BJ (cell line): ENCODE measurements at regions of chr2 and their contacts with region 1.

Region 1: GRCh38 chr2:224369028-224369632 is 32.8 kb downstream of the FAM124B start:
- DNase-seq: no peak
- H3K4me3 ChIP-seq: no peak overlapping the region
- H3K27me3 ChIP-seq: peaks cover 5% of the 10 kb centered on the region
- CTCF ChIP-seq: peak; percentile 66

Region 2: GRCh38 chr2:223970343-223971128 is 398.6 kb before region 1 on chr2:
- CTCF ChIA-PET with region 1: interaction called, 31 read pairs
- POLR2A ChIA-PET with region 1: no interaction called
- DNase-seq: no peak
- H3K4me3 ChIP-seq: no peak overlapping the region
- H3K27me3 ChIP-seq: no peaks in the 10 kb centered on the region
- CTCF ChIP-seq: peak; percentile 82

Region 3: DNA sequence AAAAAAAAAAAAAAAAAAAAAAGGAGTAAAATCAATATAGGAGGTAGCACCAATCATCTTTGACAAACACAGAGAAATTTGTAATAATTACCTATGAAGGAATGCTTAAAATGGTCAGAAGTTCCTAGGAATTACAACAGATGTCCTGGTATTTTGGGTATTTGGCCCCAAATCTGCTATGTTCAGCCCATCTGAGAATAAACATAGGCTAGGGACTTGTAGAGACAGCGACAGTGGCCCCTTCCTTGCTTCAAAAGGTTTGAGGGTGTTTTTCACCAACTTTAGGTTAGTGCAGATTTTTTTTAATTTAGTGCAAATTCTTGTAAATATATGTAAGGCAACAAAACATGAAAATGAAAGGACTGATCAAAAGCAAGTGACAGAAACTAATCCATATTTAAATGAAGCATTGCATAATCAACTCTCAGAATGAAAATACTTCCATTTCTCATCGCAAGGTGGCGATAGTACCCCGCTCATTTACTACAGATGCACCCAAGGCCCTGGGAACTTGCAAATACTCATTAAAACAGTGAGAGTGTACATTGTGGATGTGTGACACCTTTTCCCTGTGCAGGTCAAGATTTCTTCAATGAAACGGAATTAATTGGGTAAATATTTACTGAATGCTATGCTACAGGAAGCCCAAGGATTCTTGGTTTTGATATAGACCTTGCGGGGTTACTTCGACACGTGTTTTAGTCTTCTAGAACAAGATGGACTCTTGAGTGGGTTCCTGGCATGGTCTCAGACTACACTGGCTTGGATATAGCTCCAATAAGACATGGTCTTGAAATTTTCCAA is 11.8 kb before region 1 on chr2:
- CTCF ChIA-PET with region 1: interaction called, 10 read pairs
- POLR2A ChIA-PET with region 1: no interaction called
- DNase-seq: no peak
- H3K4me3 ChIP-seq: no peak overlapping the region
- H3K27me3 ChIP-seq: peaks cover 1% of the 10 kb centered on the region
- CTCF ChIP-seq: peak; percentile 66

Region 4: DNA sequence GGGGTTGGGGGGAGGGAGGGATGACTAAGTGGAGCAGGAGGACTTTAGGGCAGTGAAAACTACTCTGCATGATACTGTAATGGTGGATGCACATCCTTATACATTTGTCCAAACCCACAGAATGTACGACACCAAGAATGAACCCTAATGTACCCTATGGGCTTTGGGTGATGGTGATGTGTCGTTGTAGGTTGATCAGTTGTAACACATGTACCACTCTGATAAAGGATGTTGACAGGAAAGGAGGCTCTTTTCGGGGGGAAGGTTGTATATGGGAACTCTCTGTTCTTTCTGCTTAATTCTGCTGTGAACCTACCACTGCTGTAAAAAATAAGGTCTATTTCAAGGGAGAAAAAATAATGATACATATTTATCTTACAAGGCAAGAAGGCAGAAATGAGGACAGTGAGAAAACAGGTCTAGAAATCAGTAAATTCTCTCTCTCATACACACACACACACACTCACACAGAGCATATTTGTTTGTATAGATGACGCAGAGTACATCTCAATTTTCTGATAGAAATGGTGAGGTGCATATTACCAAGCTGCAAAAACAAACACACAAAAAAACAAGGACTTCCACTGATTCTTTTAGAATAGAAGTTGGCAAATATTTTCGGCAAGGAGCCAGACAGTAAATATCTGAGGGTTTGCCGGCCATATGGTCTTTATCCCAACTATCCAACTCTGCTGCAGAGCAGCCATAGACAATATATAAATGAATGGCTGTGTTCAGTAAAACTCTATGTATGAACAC is 12.6 kb after region 1 on chr2:
- CTCF ChIA-PET with region 1: interaction called, 15 read pairs
- POLR2A ChIA-PET with region 1: no interaction called
- DNase-seq: no peak
- H3K4me3 ChIP-seq: no peak overlapping the region
- H3K27me3 ChIP-seq: peaks cover 2% of the 10 kb centered on the region; the same call in 1 of the 2 replicates
- CTCF ChIP-seq: no peak

Region 5: GRCh38 chr2:224386876-224387275 is 17.7 kb after region 1 on chr2:
- CTCF ChIA-PET with region 1: interaction called, 15 read pairs
- POLR2A ChIA-PET with region 1: no interaction called
- DNase-seq: no peak
- H3K4me3 ChIP-seq: no peak overlapping the region
- H3K27me3 ChIP-seq: no peaks in the 10 kb centered on the region; the same call in 1 of the 2 replicates
- CTCF ChIP-seq: no peak

Region 6: GRCh38 chr2:224650815-224651439 is 281.8 kb after region 1 on chr2:
- CTCF ChIA-PET with region 1: interaction called, 32 read pairs
- POLR2A ChIA-PET with region 1: no interaction called
- DNase-seq: peak; percentile 12
- H3K4me3 ChIP-seq: no peak overlapping the region
- H3K27me3 ChIP-seq: no peaks in the 10 kb centered on the region
- CTCF ChIP-seq: peak; percentile 78